ENCODE measurements at regions of chr19 and their contacts with region 1.

Region 1: DNA sequence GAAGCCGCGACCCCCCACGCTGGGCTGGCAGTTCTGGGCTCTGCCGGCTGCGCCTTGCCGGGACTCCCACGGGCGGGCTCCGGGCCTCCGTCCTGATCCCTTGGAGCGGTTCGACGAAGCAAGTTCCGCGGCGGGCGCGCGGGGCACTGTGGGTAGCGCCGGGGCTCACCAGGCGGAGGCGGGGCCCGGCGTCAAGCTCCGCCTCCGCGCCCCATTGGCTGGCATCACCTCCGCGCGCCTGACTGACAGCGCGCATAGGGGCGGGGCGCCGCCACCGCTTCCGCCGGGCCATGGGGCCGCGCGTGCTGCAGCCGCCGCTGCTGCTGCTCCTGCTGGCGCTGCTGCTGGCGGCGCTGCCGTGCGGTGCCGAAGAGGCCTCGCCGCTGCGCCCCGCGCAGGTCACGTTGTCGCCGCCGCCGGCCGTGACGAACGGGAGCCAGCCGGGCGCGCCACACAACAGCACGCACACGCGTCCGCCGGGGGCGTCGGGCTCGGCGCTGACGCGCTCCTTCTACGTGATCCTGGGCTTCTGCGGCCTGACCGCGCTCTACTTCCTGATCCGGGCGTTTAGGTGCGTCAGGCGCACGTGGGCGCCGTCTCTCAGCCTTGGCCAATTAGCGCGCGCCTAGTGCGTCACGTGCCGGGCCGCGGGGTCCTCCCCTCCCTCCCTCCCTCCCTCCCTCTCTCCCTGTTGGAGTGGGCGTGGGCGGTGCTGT is at the start of gene FAM174C:
- DNase-seq: peak; percentile 93
- H3K4me3 Mint-ChIP-seq: peak within 1 kb of the TSS; percentile 93
- H3K27ac Mint-ChIP-seq: peak within 1 kb of the TSS; percentile 97
- H3K4me1 Mint-ChIP-seq: peaks cover 26% of the 10 kb centered on the region
- H3K27me3 Mint-ChIP-seq: no peaks in the 10 kb centered on the region
- total RNA-seq, gene FAM174C: 119 and 128 TPM in 2 replicates

Region 2: GRCh38 chr19:1355568-1356507 is 80.4 kb after region 1 on chr19:
- intact Hi-C with region 1: loop called (anchors 1 kb)
- DNase-seq: no peak
- H3K4me3 Mint-ChIP-seq: peak overlapping the region; percentile 88
- H3K27ac Mint-ChIP-seq: peak overlapping the region; percentile 82
- H3K4me1 Mint-ChIP-seq: peaks cover 11% of the 10 kb centered on the region
- H3K27me3 Mint-ChIP-seq: peaks cover 5% of the 10 kb centered on the region

Region 3: GRCh38 chr19:1373534-1374249 is 98.3 kb after region 1 on chr19:
- intact Hi-C with region 1: loop called (anchors 1 kb)
- DNase-seq: no peak
- H3K4me3 Mint-ChIP-seq: no peak overlapping the region
- H3K27ac Mint-ChIP-seq: no peak overlapping the region
- H3K4me1 Mint-ChIP-seq: no peaks in the 10 kb centered on the region
- H3K27me3 Mint-ChIP-seq: no peaks in the 10 kb centered on the region

Region 4: DNA sequence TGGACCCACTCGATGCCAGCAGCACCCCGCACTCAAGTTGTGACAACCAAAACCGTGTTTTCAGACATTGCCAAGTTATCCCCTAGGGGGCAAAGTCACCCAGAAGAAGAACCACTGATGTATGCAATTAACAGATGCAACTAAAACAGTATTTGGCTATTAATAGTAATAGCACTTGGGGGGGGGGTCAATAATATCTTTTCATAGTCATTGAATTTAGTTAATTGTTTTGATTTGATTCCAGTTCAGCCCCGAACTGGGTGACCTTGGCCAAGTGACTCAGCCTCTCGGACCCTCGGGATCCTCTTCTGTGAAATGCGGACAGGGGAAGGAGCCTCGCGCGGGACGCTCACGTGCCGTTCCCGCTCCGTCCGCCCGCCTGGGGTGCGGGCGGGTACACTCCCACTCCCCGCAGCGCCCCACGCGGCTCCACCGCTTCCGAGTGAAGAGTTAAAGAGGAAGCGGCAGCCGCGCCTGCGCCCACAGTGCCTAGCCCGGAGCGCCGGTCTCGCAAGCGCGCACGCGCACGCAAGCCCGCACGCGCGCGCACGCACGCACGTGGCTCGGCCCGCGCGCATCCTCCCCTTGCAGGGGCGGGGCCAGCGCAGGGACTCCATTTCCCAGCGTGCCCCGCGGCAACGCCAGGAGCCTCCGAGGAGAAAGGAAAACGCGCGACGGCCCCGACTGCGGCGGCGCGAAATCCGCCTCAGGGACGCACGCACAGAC is 131.5 kb after region 1 on chr19:
- intact Hi-C with region 1: loop called (anchors 1 kb)
- DNase-seq: peak; percentile 100
- H3K4me3 Mint-ChIP-seq: peak overlapping the region; percentile 76
- H3K27ac Mint-ChIP-seq: peak overlapping the region; percentile 83
- H3K4me1 Mint-ChIP-seq: peaks cover 33% of the 10 kb centered on the region
- H3K27me3 Mint-ChIP-seq: peaks cover 7% of the 10 kb centered on the region

Region 5: DNA sequence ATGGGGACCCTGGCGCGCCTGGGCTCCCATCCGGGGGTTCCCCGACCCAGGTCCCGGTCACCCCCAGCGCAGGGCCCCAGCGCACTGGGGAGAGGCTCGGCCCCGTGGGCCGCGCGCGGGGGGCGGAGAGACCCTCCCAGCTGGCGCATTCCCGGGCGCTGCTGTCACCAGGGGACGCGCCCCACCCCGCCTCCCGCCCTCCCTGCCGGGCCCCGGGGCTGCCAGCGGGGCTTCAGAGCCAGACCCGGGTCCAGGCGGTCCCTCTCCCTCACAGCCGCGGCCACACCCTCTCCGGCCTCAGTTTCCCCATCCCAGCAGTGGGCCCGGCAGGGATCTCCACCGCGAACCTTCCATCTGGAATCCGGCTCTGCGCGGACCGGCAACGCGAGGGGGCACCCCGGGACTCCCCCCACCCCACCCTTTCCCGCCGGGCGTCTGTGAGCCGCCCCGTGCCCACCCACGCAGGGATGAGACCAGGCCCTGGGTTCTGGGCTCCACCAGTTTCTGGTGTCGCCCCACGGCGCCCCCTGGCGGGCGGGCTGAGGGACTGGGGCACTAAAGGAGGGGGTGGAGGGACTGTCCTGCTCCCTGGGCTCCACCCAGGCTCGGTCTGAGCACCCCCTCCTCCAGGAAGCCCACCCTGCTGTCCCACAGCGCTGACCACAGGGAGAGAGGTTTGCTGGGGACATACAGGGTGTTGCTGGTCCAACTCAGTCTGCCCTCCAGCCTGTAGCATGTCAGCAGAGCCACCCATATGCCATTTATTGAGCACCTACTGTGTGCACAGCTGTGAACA is 238.3 kb after region 1 on chr19:
- intact Hi-C with region 1: loop called (anchors 5 kb)
- DNase-seq: peak; percentile 57
- H3K4me3 Mint-ChIP-seq: no peak overlapping the region
- H3K27ac Mint-ChIP-seq: no peak overlapping the region
- H3K4me1 Mint-ChIP-seq: no peaks in the 10 kb centered on the region
- H3K27me3 Mint-ChIP-seq: peaks cover 12% of the 10 kb centered on the region

Region 6: DNA sequence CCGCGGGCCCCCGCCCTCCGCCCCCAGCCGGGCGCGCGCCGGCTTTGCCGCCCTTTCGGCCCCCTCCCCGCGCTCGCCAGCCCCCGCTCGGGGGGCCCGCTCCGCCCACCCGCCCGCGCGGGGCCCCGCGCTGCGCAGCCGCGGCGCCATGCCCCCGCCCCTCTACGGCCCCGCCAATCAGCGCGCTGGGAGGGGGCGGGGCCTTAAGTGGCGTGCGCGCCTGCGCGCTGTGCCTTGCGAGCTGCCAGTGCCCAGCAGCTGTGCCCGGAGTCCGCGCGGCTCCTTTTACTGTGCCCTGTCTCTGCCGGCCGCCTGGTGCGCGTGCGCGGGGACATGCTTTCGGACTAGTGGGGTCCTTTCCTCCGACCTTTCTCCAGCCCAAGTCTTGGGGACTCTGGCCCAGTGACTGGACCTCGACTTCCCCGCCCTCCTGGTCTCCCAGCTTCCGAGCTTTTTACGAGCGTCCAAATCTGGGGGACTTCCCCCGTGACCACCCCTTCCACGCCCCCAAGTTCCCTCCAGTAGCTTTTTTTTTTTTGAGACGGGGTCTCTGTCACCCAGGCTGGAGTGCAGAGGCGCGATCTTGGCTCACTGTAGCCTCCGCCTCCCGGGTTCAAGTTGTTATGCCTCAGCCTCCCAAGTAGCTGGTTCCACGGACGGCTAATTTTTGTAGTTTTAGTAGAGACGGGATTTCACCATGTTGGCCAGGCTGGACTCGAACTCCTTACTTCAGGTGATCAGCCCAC is 317.5 kb after region 1 on chr19 and contains the start of gene MBD3:
- intact Hi-C with region 1: loop called (anchors 5 kb)
- DNase-seq: peak; percentile 87
- H3K4me3 Mint-ChIP-seq: peak within 1 kb of the TSS; percentile 91
- H3K27ac Mint-ChIP-seq: peak within 1 kb of the TSS; percentile 91
- H3K4me1 Mint-ChIP-seq: peaks cover 20% of the 10 kb centered on the region
- H3K27me3 Mint-ChIP-seq: no peaks in the 10 kb centered on the region
- total RNA-seq, gene MBD3: 136 and 139 TPM in 2 replicates

Region 7: GRCh38 chr19:1652471-1653299 is 377.3 kb after region 1 on chr19 and contains the start of gene TCF3:
- intact Hi-C with region 1: loop called (anchors 5 kb)
- DNase-seq: peak; percentile 98
- H3K4me3 Mint-ChIP-seq: peak within 1 kb of the TSS; percentile 95
- H3K27ac Mint-ChIP-seq: peak within 1 kb of the TSS; percentile 97
- H3K4me1 Mint-ChIP-seq: peaks cover 16% of the 10 kb centered on the region
- H3K27me3 Mint-ChIP-seq: peaks cover 1% of the 10 kb centered on the region
- total RNA-seq, gene TCF3: 163 and 172 TPM in 2 replicates